Pancreas (tissue), 10 donors: ENCODE measurements at regions of chr4 and their contacts with region 1.

Region 1: DNA sequence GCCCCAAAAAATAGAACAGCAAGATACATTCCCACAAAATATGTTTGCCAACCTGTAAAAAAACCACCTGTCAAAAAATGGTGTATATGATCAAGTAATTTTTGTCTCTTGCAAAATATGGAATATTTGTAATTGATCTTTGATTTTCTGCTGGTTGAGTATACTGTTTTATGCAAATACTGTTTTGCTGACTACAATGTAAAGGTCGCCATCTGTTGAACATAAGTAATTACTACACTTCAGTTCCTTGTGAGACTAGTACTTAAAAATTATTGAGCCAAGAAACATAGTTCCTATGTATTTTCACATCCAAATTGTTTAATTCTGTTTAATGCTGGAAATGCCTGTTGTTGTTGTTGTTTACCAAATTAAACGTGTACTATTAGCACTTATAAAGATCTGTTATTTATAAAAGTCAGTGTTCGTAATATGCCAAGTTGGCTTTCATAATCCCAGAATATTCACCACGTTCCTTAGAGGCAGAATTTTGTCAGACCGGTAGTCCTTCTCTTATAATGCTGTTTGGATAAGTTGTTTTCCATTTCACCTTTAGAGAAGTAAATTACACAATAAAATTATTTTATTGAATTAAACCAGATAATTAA is 144.2 kb downstream of the PDLIM5 start:
- DNase-seq: no peak
- ATAC-seq: peak; percentile 84 to 92 (median 90)
- H3K4me3 ChIP-seq: no peak overlapping the region
- H3K27ac ChIP-seq: no peak overlapping the region
- H3K4me1 ChIP-seq: peaks cover 0 to 9% (median 7%) of the 10 kb centered on the region in 3 donors
- H3K27me3 ChIP-seq: no peaks in the 10 kb centered on the region
- CTCF ChIP-seq: peak in 3 of 4 donors; percentile 26 to 39 (median 37)

Region 2: DNA sequence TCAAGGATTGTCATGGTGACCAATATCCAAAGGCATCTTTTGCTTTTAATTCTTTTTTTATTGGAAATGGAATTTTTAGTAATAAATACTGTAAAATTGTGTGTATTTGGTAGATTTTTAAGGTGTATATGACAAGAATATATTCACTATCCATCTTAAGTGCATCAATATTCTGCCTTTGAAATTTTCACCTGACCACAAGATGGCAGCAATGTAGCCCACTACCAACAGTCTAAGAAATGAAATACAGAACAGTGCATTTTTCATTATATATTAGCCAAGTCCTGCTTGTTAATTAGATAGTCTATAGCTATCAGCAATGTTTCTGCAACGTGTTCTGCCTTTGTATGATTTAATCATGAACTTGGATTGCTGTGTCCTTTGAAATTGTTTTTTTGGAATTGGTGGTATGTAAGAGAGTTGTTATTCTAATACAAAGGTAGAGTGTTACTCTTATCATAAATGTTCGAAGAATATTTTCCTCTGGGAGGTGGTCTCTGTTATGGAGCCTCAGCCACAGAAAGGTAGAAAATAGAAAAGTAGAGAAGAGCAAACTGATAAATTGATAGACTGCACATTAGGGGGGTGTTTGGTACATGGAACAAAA is 291.5 kb before region 1 on chr4:
- intact Hi-C with region 1: no loop called
- DNase-seq: no peak
- ATAC-seq: peak in 3 of 4 donors; percentile 66 to 71 (median 66)
- H3K4me3 ChIP-seq: no peak overlapping the region
- H3K27ac ChIP-seq: no peak overlapping the region
- H3K4me1 ChIP-seq: peaks cover 0 to 3% (median 0%) of the 10 kb centered on the region in 3 donors
- H3K27me3 ChIP-seq: no peaks in the 10 kb centered on the region
- CTCF ChIP-seq: peak in 3 of 4 donors; percentile 37 to 49 (median 40)

Region 3: GRCh38 chr4:94406668-94407437 is 189.1 kb before region 1 on chr4:
- intact Hi-C with region 1: loop called in 2 of 3 experiments (anchors 5 kb)
- DNase-seq: peak in 4 of 6 donors; percentile 57 to 74 (median 66)
- ATAC-seq: peak; percentile 89 to 100 (median 96)
- H3K4me3 ChIP-seq: no peak overlapping the region
- H3K27ac ChIP-seq: no peak overlapping the region
- H3K4me1 ChIP-seq: peaks cover 0 to 3% (median 0%) of the 10 kb centered on the region in 3 donors
- H3K27me3 ChIP-seq: no peaks in the 10 kb centered on the region
- CTCF ChIP-seq: peak; percentile 79 to 84 (median 82)